ENCODE measurements at regions of chr4 and their contacts with region 1.

Region 1: DNA sequence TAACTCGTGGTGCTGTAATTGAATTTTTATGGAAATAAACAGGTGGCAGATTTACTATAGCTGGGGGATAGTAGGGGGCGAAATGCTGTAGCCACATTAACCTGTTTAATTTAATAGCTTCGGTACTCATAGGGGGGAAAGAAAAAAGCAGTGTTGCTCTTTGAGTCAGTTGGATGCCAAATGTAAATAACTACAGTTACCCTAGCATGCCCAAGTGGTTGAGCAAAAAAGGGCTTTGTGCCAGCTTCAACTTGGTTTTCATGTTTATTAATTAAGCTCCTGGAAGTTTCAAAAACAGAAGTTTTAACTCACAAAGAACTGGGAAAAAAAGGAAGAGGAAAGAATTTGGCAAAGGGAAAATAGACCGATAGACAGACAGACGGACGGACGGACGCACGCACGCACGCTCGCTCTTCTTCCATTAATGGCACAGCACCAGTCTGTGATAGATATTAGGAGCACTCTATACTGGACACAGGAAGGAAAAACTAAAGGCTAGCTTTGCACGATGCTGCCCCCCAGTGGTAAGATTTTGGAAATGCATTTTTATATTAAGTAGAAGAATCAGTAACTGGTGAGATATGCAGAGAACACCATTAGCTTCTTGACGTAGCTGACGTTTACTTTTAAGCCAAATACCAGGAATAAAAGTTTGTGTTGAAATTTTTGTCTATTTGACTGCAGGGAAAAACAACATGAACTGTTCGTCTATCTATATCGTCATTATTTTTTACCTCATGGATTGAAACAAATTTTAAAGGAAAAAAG is 151.8 kb downstream of the SLC7A11 start:
- DNase-seq: no peak

Region 2: GRCh38 chr4:138870737-138871554 is 780.6 kb after region 1 on chr4:
- intact Hi-C with region 1: loop called (anchors 5 kb)
- DNase-seq: no peak

Measured in cardiac septum (tissue), 1 donor.